CD8-positive, alpha-beta T cell (primary cell): ENCODE measurements at regions of chr1 and their contacts with region 1.

Region 1: DNA sequence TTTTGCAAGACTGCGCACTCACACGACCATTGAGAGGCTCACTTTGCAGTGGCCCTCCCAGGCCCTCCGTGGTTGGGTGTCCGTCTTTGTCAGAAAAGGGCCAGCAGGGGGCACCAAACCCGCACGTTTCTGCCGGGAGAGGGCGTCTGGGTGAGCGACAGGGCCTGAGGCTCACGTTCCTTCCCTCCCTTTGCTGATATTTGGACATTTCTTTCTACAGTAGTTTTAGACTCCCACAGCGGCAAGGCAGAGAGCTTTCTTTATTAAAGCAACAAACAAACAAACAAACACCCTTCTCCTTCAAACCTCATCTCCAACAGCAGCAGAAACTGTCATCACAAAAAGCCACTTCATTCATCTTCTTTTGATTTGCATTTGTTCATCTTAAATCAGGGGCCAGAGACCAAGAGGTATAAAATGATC is 79.2 kb upstream of the WDR26 start:
- DNase-seq: peak; percentile 68 to 91 (median 81)
- ATAC-seq: peak; percentile 78
- H3K4me3 ChIP-seq: no peak overlapping the region
- H3K4me3 Mint-ChIP-seq: no peak overlapping the region
- H3K27ac ChIP-seq: no peak overlapping the region
- H3K27ac Mint-ChIP-seq: no peak overlapping the region
- H3K4me1 ChIP-seq: no peaks in the 10 kb centered on the region
- H3K4me1 Mint-ChIP-seq: peaks cover 6% of the 10 kb centered on the region
- H3K27me3 ChIP-seq: no peaks in the 10 kb centered on the region
- H3K27me3 Mint-ChIP-seq: no peaks in the 10 kb centered on the region
- CTCF ChIP-seq: peak; percentile 85

Region 2: DNA sequence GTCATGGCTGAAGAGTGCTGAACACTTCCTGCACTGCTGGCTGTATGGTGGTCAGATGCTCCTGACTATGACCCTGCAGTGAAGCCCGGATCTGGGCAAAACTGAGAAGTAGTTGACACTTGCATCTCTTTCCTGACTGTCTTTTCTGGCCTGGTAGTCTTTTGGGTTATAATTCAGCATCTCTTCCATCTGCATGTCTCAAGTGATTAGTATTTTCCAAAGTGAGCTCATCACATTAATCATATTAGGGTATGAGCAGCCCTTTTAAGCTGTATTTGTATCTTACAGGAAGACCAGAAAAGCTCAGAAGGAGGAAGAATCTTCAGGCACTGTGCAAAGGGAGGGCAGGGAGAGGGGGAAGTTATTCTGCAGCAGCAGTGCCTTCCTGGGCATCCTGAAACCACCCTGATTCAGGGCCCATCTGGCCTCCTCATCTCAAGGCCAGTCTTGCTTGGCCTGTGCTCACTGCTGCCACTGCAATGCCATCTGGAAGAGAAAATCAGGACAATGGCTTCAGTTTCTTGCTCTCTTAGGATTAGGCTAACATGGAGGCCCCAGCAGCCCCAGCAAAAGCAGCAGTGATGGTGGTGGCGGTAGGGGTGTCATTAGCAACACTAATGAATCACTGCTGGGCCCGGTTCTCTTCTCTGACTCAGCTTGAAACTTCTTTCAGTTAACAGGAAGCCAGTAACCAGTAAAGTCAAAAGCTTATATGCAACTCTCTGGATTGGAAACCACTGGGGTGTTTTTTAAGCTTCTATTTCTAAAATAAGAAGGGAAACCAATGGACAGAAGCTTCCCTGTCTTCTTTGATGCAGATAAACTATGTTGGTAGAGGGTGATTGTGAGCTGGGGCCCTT is 15.9 kb before region 1 on chr1:
- CTCF ChIA-PET with region 1: interaction called, 22 read pairs
- POLR2A ChIA-PET with region 1: no interaction called
- intact Hi-C with region 1: no loop called
- DNase-seq: peak in 7 of 9 experiments; percentile 27 to 56 (median 42)
- ATAC-seq: peak; percentile 59
- H3K4me3 ChIP-seq: no peak overlapping the region
- H3K4me3 Mint-ChIP-seq: no peak overlapping the region
- H3K27ac ChIP-seq: peak overlapping the region in 1 of 2 experiments; percentile 67
- H3K27ac Mint-ChIP-seq: peak overlapping the region; percentile 24
- H3K4me1 ChIP-seq: peaks cover 14% of the 10 kb centered on the region
- H3K4me1 Mint-ChIP-seq: peaks cover 18% of the 10 kb centered on the region
- H3K27me3 ChIP-seq: no peaks in the 10 kb centered on the region
- H3K27me3 Mint-ChIP-seq: no peaks in the 10 kb centered on the region
- CTCF ChIP-seq: no peak

Region 3: DNA sequence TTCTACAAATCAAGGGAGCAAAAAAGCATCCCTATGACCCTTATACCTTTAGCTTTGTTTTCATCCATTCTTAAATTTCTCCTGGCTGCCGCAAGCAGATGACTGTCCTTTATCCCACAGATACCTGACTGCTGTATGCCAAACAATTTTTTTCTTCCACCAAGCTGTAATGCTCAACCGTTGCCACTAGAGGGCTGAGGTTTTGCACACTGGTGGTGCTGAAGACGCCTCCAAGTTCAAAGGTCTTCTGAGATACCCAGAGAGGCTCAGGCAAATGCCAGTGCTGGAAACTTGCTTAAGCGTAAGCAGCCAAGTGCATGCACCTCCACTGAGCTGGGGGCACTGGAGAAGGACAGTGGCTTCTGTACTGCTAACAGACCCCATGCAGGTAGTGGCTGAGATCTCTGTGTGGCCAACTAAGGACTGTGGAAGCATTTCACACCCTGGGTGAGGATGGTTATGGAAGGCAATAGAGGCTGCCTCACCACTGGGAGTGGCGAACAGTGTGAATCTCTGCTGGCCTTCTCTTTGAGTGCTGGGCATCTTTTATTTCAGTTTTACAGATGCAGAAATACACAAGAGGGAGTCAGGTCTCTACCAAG is 130.9 kb after region 1 on chr1:
- CTCF ChIA-PET with region 1: interaction called, 7 read pairs
- POLR2A ChIA-PET with region 1: no interaction called
- intact Hi-C with region 1: loop called (anchors 1 to 5 kb)
- DNase-seq: peak; percentile 18 to 75 (median 58)
- ATAC-seq: peak; percentile 79
- H3K4me3 ChIP-seq: no peak overlapping the region
- H3K4me3 Mint-ChIP-seq: no peak overlapping the region
- H3K27ac ChIP-seq: no peak overlapping the region
- H3K27ac Mint-ChIP-seq: no peak overlapping the region
- H3K4me1 ChIP-seq: no peaks in the 10 kb centered on the region
- H3K4me1 Mint-ChIP-seq: no peaks in the 10 kb centered on the region
- H3K27me3 ChIP-seq: no peaks in the 10 kb centered on the region
- H3K27me3 Mint-ChIP-seq: peaks cover 2% of the 10 kb centered on the region
- CTCF ChIP-seq: peak; percentile 96

Region 4: DNA sequence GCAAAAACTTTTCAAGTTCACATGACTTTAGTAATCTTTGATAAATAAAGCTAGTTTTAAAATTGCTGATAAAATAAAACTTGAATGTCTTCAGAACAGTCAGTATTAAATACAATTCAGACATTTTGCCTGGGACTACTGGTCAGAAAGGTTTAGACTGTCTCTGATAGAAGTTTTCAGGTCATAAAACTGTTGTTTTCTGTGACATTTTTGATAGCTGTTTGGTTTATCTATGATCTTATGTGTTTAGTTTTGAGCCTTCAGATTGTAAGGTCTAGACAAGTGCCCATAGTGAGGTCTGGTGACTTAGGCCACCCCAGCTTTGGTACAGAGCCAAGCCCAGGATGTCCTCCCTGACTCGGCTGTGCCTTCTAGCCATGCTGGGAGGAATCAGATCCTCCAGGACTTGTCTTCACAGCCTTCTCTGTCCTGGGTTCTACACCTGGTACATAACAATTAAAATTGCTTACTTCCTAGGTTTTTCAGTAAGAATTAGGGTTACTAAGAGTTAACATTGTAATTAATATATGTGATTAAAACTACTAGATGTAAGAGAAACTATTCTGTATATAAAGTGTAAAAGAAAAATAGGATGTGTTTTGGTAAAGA is 400.6 kb after region 1 on chr1:
- CTCF ChIA-PET with region 1: interaction called, 12 read pairs
- POLR2A ChIA-PET with region 1: no interaction called
- intact Hi-C with region 1: no loop called
- DNase-seq: no peak
- ATAC-seq: no peak
- H3K4me3 ChIP-seq: no peak overlapping the region
- H3K4me3 Mint-ChIP-seq: no peak overlapping the region
- H3K27ac ChIP-seq: no peak overlapping the region
- H3K27ac Mint-ChIP-seq: no peak overlapping the region
- H3K4me1 ChIP-seq: no peaks in the 10 kb centered on the region
- H3K4me1 Mint-ChIP-seq: no peaks in the 10 kb centered on the region
- H3K27me3 ChIP-seq: no peaks in the 10 kb centered on the region
- H3K27me3 Mint-ChIP-seq: peaks cover 7% of the 10 kb centered on the region
- CTCF ChIP-seq: no peak

Region 5: DNA sequence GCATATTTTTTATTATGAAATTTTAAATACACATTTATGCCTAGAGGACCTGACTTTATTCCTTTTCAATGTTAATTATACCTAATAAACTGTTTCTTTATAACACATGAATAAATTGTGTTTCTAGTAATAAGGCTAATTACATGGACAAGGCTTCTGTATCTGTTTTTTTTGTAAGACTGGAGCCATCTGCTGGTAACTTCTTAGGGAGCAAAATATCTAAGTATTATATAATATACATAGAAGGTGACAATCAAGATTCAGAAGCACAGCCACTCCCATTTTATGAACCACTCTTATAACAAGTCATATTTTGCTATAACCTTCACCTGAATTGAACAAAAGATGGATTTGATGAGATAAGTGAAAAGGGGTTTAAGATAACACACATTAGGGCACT is 829.8 kb after region 1 on chr1:
- CTCF ChIA-PET with region 1: no interaction called
- POLR2A ChIA-PET with region 1: no interaction called
- intact Hi-C with region 1: loop called in 1 of 2 experiments (anchors 10 kb)
- DNase-seq: peak in 2 of 9 experiments; percentile 8 to 33
- ATAC-seq: no peak
- H3K4me3 ChIP-seq: no peak overlapping the region
- H3K4me3 Mint-ChIP-seq: no peak overlapping the region
- H3K27ac ChIP-seq: no peak overlapping the region
- H3K27ac Mint-ChIP-seq: no peak overlapping the region
- H3K4me1 ChIP-seq: no peaks in the 10 kb centered on the region
- H3K4me1 Mint-ChIP-seq: no peaks in the 10 kb centered on the region
- H3K27me3 ChIP-seq: peaks cover 0 to 5% of the 10 kb centered on the region in 2 experiments
- H3K27me3 Mint-ChIP-seq: peaks cover 26% of the 10 kb centered on the region
- CTCF ChIP-seq: peak; percentile 19